ENCODE measurements at regions of chr3 and their contacts with region 1.

Region 1: GRCh38 chr3:139329345-139329850 is 14.4 kb upstream of the MRPS22 start:
- DNase-seq: peak; percentile 88 to 95 (median 94)
- ATAC-seq: peak; percentile 94 to 97
- H3K4me3 ChIP-seq: no peak overlapping the region
- H3K27ac ChIP-seq: no peak overlapping the region
- H3K4me1 ChIP-seq: peaks cover 2% of the 10 kb centered on the region
- H3K27me3 ChIP-seq: no peaks in the 10 kb centered on the region

Region 2: DNA sequence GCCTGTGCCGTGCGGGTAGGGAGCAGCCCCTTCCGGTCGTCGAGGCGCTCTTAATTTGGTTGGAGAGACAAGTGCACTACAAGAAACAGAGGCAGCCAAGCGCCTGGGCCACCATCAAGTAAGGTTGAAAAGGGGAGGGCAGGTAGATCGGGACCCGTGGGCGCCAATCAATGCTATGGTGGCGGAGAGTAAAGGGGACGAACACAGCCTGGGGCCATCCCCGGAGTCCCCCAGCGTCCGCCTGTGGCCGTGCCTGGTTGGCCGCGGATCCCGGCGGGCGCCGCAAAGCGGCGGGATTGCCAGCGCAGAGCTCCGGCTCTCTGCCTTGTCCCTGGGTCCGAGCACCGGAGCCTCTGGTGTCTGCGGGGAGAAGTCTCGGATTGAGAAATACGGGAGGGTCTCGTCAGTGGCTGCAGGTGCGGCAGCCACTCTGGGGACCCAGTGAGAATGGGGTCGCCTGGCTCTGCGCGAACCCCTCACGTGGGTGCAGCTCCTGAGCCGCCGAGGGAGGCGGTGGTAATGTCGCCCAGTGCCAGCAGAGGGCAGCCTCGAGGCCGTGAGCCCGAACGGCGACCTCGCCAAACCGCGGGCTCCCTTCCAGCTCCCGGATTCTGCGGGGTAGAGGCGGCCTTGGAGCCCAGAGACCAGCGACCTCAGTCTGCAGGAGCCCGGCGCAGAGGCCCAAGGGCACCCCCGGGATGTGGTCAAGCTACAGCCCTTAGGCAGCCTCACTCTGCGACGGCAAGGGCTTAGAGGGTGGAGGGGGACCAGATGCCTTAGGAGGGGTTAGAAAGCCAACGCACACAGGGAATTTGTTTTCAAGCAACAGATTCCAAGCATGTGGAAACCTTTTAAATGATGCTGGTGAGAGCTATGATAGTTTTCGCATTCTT is 393.3 kb before region 1 on chr3:
- intact Hi-C with region 1: loop called in 3 of 4 experiments (anchors 5 to 10 kb)
- DNase-seq: peak; percentile 80 to 93 (median 91)
- ATAC-seq: peak; percentile 72 to 80
- H3K4me3 ChIP-seq: peak overlapping the region; percentile 4
- H3K27ac ChIP-seq: no peak overlapping the region
- H3K4me1 ChIP-seq: no peaks in the 10 kb centered on the region
- H3K27me3 ChIP-seq: no peaks in the 10 kb centered on the region

Region 3: DNA sequence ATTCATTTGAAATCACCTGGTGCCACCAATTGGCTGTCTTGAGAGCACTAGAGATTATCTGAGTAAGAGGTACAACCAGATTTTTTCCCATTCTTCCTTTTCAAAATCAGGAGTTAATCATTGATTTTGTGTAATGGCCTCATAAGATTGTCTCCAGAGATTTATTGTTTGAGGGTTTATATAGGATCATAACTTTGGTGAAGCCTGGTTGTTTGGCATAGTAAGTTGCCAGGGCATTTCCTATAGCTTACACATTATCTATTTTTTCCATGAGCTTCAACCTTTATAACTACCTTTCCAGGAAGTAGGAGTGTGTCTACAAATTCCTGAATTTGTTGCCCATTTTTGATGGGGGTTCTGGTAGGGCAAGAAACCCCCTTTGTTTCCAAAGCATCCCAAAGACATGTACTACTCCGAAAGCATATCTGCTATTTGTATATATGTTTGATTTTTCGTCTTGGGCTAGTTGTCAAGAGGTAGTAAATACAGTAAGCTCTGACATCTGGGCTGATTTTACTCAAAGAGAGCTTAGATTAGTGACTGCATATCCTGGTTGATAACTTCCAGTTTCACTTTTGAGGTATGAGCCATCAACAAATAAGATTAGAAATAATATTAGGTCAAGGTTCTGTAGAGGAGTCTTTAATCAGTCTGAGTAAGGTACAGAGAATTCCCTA is 296.9 kb before region 1 on chr3:
- intact Hi-C with region 1: no loop called
- DNase-seq: no peak
- ATAC-seq: no peak
- H3K4me3 ChIP-seq: no peak overlapping the region
- H3K27ac ChIP-seq: no peak overlapping the region
- H3K4me1 ChIP-seq: no peaks in the 10 kb centered on the region
- H3K27me3 ChIP-seq: no peaks in the 10 kb centered on the region

Region 4: DNA sequence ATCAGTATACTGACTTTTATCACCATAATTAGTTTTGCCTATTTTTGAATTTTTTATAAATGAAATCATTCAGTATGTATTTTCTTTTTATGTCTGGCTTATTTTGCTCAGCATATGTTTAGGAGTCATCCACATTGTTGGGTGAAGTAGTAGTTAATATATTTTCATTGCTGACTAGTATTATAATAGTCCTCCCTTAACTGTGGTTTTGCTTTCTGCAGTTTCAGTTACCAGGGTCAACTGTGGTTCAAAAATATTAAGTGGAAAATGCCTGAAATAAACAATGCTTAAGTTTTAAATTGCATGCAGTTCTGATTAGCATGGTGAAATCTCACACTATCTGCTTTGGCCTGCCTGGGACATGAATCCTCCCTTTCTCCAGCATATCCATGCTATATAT is 245.2 kb before region 1 on chr3:
- intact Hi-C with region 1: no loop called
- DNase-seq: no peak
- ATAC-seq: no peak
- H3K4me3 ChIP-seq: no peak overlapping the region
- H3K27ac ChIP-seq: no peak overlapping the region
- H3K4me1 ChIP-seq: no peaks in the 10 kb centered on the region
- H3K27me3 ChIP-seq: no peaks in the 10 kb centered on the region

Region 5: GRCh38 chr3:139111392-139112229 is 217.8 kb before region 1 on chr3:
- intact Hi-C with region 1: loop called (anchors 2 to 5 kb)
- DNase-seq: peak; percentile 55 to 79 (median 78)
- ATAC-seq: peak; percentile 76 to 88
- H3K4me3 ChIP-seq: no peak overlapping the region
- H3K27ac ChIP-seq: no peak overlapping the region
- H3K4me1 ChIP-seq: no peaks in the 10 kb centered on the region
- H3K27me3 ChIP-seq: no peaks in the 10 kb centered on the region